Activated B cell treated with CpG ODN at 0.5 μM for 24 hours (primary cell): ENCODE measurements at regions of chr7 and their contacts with region 1.

Region 1: DNA sequence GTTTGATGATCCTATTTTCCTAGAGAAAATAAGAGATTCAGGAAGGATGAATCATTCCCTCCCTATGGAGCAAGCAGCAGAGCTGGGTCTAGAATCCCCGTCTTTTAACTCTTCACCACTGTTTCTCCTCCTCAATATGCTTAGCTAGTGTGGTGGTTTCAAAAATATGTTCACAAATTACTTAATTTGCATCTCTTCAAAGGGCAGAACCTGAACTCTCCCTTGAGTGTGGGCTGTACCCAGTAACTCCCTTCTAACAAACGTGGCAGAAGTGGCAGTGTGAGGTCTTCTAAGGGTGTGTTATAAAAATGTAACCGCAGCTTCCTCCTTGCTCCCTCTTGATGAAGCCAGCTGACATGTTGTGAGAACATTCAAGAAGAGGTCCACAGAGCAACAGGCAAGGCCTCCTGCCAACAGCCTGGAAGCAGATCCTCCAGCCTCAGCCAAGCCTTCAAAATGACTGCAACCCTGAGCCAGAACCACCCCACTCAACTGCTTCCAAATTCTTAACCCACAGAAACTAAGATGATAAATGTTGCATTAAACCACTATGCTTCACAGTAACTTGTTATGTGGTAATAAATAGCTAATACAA is 36.6 kb downstream of the SRPK2 start:
- DNase-seq: peak; percentile 40
- ATAC-seq: peak; percentile 88
- H3K4me3 Mint-ChIP-seq: peak overlapping the region; percentile 82
- H3K27ac Mint-ChIP-seq: peak overlapping the region; percentile 99
- H3K4me1 Mint-ChIP-seq: peaks cover 86% of the 10 kb centered on the region
- H3K27me3 Mint-ChIP-seq: no peaks in the 10 kb centered on the region
- CTCF ChIP-seq: no peak

Region 2: GRCh38 chr7:105210721-105211205 is 141.4 kb before region 1 on chr7:
- CTCF ChIA-PET with region 1: no interaction called
- POLR2A ChIA-PET with region 1: no interaction called
- intact Hi-C with region 1: no loop called
- DNase-seq: no peak
- ATAC-seq: peak; percentile 77
- H3K4me3 Mint-ChIP-seq: peak overlapping the region; percentile 50
- H3K27ac Mint-ChIP-seq: peak overlapping the region; percentile 90
- H3K4me1 Mint-ChIP-seq: peaks cover 86% of the 10 kb centered on the region
- H3K27me3 Mint-ChIP-seq: no peaks in the 10 kb centered on the region
- CTCF ChIP-seq: no peak

Region 3: DNA sequence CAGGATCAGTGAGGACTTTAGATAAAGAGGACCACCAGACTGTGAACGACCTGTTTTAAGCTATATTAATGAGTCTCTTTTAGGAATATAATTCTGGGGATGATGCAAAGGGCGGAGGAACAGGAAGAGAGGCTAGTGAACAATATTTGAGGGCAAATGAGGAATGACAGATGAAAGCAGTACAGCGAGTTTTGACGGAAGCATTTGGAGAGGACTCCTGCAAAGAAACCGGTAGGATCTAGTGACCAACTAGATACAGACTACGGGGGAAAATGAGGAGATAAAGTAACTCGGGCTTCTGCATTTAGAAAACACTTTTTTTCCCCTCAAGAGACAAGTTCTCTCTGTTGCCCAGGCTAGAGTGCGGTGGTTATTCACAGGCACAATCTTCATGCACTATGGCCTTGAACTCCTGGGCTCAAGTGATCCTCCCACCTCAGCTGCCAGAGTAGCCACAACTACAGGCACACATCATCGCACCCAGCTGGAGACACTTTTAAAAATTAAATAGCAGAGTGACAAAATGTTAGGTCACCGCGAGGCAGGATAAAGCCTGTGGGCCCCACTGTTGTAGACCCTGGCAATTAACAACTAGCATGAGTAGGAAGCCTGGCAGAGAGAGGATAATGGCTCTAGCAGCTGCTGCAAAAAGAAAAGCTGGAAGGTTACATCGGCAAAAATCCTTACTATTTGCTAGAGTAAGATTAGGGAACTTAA is 106.6 kb before region 1 on chr7:
- CTCF ChIA-PET with region 1: no interaction called
- POLR2A ChIA-PET with region 1: interaction called, 10 read pairs
- intact Hi-C with region 1: no loop called
- DNase-seq: no peak
- ATAC-seq: peak; percentile 25
- H3K4me3 Mint-ChIP-seq: no peak overlapping the region
- H3K27ac Mint-ChIP-seq: no peak overlapping the region
- H3K4me1 Mint-ChIP-seq: peaks cover 28% of the 10 kb centered on the region
- H3K27me3 Mint-ChIP-seq: no peaks in the 10 kb centered on the region
- CTCF ChIP-seq: no peak

Region 4: DNA sequence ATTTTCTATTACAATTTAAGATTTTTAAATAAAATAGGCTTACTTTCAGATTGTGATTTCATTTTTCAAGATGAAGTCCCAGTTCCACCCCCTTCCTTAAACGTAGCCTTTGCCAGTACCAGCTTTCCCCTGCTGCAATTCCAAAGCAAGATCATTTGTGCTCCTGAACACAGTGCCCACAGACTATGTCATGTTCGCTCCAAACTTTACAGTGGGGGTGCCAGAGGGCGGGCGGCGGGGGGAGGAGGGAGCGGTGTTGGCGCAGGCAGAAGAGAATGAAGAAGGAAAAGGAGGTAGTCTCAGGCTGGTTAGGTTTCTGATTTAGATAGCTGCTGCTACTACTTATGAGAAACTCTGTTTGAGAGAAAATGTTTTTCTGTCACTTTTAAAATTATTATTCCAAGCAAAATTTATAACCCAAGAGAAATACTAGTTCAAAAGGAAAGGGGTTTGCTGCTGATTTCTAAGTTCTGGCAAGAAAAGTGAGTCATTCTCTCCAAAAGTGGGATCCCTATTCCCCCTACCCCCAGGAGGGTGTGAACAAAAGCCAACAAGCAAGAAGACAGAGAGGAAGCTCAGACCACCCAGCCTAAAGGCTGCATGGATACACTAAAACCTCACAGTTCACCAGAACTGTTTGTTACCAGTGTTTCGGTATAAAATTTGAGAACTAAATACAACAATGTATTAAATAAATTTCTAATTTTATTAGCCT is 73.0 kb before region 1 on chr7:
- CTCF ChIA-PET with region 1: no interaction called
- POLR2A ChIA-PET with region 1: no interaction called
- intact Hi-C with region 1: no loop called
- DNase-seq: no peak
- ATAC-seq: no peak
- H3K4me3 Mint-ChIP-seq: no peak overlapping the region
- H3K27ac Mint-ChIP-seq: no peak overlapping the region
- H3K4me1 Mint-ChIP-seq: peaks cover 17% of the 10 kb centered on the region
- H3K27me3 Mint-ChIP-seq: no peaks in the 10 kb centered on the region
- CTCF ChIP-seq: no peak

Region 5: DNA sequence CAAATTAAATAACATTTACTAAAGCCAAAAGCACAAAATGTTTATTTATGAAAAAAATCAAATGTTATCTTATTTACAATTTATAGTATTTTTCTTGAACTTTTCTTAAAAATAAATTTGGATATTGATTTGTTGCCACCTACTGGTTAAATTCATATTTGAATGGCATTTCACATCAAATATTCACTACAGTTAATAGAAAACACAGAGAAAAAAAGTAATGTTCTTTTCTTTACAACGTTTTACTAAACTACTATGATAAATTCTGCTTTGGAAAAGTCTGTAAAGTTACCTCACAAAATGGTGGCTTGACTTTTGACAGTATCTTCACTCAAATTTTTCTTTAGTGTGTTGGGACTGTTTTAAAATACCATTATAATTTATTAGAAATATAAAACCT is 16.1 kb before region 1 on chr7:
- CTCF ChIA-PET with region 1: interaction called, 4 read pairs
- POLR2A ChIA-PET with region 1: interaction called, 9 read pairs
- intact Hi-C with region 1: loop called (anchors 2 kb)
- DNase-seq: no peak
- ATAC-seq: no peak
- H3K4me3 Mint-ChIP-seq: no peak overlapping the region
- H3K27ac Mint-ChIP-seq: no peak overlapping the region
- H3K4me1 Mint-ChIP-seq: peaks cover 28% of the 10 kb centered on the region
- H3K27me3 Mint-ChIP-seq: no peaks in the 10 kb centered on the region
- CTCF ChIP-seq: no peak

Region 6: GRCh38 chr7:105387621-105388372 is 35.7 kb after region 1 on chr7:
- CTCF ChIA-PET with region 1: interaction called, 4 read pairs
- POLR2A ChIA-PET with region 1: interaction called, 36 read pairs
- intact Hi-C with region 1: loop called (anchors 1 kb)
- DNase-seq: peak; percentile 48
- ATAC-seq: peak; percentile 51
- H3K4me3 Mint-ChIP-seq: peak overlapping the region; percentile 88
- H3K27ac Mint-ChIP-seq: peak overlapping the region; percentile 69
- H3K4me1 Mint-ChIP-seq: peaks cover 27% of the 10 kb centered on the region
- H3K27me3 Mint-ChIP-seq: no peaks in the 10 kb centered on the region
- CTCF ChIP-seq: no peak

Region 7: DNA sequence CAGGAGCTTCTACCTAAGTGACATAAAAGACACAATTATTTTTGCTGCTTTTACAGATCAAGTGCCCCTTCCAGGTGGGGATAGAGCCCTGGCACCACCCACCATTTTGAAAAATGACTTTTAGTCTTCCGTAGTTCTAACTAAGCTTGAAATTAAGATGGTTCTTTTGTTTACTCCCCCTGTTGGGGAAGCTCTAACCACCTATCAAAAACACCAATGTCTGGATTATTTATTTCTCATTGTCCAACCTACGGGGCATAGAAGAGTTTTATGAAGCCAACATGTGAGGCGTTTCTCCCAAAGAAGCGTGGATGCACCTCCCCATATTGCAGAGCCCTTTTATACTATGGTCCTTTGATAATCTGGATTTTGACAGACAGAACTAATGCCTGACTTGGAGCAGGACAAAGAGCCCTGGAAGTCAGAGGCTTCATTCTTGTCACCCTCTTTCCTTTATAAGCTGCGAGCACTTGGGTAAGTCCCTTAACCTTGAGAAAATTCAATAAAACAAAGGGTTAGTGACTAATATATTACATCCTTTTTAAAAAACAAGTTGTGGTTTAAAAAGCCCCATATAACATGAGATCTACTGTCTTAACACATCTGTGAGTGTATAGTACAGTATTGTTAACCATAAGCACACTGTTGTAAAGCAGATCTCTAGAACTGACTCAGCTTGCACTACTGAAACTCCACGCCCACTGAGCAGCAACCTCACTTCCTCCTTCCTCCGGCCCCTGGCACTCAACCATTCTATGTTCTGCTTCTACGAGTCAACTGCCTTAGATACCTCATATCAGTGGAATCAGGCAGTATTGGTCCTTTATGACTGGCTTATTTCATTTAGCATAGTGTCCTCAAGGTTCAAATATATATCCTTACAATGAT is 456.8 kb after region 1 on chr7:
- CTCF ChIA-PET with region 1: no interaction called
- POLR2A ChIA-PET with region 1: no interaction called
- intact Hi-C with region 1: loop called (anchors 10 kb)
- DNase-seq: peak; percentile 60
- ATAC-seq: peak; percentile 95
- H3K4me3 Mint-ChIP-seq: peak overlapping the region; percentile 66
- H3K27ac Mint-ChIP-seq: peak overlapping the region; percentile 87
- H3K4me1 Mint-ChIP-seq: peaks cover 46% of the 10 kb centered on the region
- H3K27me3 Mint-ChIP-seq: no peaks in the 10 kb centered on the region
- CTCF ChIP-seq: no peak